ENCODE measurements at regions of chr7 and their contacts with region 1.

Region 1: GRCh38 chr7:26365077-26365900 is 73.6 kb downstream of the SNX10 start:
- DNase-seq: peak in 4 of 10 donors; percentile 19 to 64 (median 56)
- H3K4me3 ChIP-seq: peak overlapping the region in 4 of 59 donors; percentile 5 to 24 (median 14)
- H3K27ac ChIP-seq: peak overlapping the region in 3 of 59 donors; percentile 4 to 10 (median 5)
- H3K27me3 ChIP-seq: peaks cover 0 to 27% (median 0%) of the 10 kb centered on the region in 45 donors
- CTCF ChIP-seq: peak; percentile 65 to 95 (median 85)

Region 2: DNA sequence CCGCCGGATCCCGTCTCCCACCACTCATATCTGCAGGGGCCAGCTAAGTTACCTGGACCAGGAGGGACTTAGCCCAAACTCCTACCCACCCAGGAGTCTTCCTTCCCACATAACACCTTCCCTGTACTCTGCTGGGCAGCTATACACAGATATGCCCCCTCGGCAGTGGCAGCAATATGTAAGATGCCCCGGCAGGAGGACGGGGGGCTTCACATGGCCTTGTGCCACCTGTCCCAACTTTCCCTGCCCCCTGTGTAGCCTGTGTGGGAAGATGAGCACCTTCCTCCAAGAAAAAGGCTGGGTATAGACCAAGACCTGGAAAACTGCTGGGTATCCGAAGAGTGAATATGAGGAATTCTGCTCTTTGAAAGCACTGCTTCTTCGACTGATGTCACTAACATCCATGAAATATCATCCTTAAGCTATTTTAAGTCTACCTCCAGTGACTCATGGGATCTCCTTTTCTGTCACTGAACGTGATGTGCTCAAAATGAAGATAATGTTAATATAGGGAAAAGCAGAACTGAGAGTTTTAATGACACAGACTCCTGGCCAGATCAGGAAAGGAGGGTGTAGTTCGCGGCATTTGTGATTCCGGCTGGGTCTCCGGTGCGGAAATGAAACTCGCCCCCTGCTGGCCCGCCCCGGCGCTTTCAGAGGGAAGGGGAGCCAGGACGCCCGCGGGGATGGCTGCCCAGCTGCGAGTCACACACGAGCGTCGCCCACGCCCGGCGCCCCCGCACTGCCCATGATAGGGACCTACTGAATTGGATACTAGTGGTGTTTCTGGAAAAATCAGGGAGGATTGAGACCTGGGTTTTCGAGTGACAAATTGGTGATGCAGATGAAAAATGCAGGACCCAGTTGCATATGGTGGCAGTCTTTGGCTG is 470.1 kb before region 1 on chr7:
- intact Hi-C with region 1: loop called (anchors 1 to 2 kb)
- DNase-seq: peak in 9 of 10 donors; percentile 49 to 81 (median 60)
- H3K4me3 ChIP-seq: peak overlapping the region in 56 of 59 donors; percentile 0 to 62 (median 41)
- H3K27ac ChIP-seq: peak overlapping the region in 1 of 59 donors; percentile 5
- H3K27me3 ChIP-seq: peaks cover 0 to 24% (median 0%) of the 10 kb centered on the region in 45 donors
- CTCF ChIP-seq: peak; percentile 32 to 80 (median 68)

Region 3: DNA sequence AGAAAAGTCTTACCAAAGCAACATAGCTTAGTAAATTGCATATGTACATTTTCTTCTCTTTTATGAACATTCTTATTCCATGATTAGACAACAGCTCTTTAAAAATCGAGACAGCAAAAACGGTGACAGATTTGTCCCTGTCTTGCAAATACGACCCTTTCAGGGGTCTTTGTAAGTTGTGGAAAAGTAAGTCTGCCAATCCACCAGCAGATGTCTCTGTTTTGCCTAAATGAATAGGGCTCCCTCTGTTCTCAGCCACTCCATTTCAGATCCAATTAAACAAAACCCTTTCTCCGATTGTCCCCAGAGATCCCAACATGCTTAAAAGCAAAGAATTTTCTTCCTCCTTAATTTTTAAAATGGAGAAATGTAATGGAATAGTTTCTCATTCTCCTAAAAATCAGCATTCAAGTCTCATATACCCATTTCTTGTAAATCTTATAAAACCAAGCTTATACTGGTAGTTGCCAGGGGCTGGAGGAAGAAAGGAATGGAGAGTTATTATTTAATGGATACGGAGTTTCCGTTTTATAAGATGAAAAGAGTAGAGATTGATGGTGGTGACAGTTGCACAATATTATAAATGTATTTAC is 274.3 kb before region 1 on chr7:
- intact Hi-C with region 1: loop called (anchors 1 to 5 kb)
- DNase-seq: peak in 1 of 10 donors; percentile 26
- H3K4me3 ChIP-seq: peak overlapping the region in 34 of 59 donors; percentile 0 to 48 (median 24)
- H3K27ac ChIP-seq: no peak overlapping the region
- H3K27me3 ChIP-seq: no peaks in the 10 kb centered on the region
- CTCF ChIP-seq: peak; percentile 53 to 93 (median 75)

Region 4: GRCh38 chr7:26127411-26127810 is 237.9 kb before region 1 on chr7:
- intact Hi-C with region 1: no loop called
- DNase-seq: no peak
- H3K4me3 ChIP-seq: no peak overlapping the region
- H3K27ac ChIP-seq: no peak overlapping the region
- H3K27me3 ChIP-seq: peaks cover 0 to 18% (median 0%) of the 10 kb centered on the region in 45 donors
- CTCF ChIP-seq: no peak

Region 5: DNA sequence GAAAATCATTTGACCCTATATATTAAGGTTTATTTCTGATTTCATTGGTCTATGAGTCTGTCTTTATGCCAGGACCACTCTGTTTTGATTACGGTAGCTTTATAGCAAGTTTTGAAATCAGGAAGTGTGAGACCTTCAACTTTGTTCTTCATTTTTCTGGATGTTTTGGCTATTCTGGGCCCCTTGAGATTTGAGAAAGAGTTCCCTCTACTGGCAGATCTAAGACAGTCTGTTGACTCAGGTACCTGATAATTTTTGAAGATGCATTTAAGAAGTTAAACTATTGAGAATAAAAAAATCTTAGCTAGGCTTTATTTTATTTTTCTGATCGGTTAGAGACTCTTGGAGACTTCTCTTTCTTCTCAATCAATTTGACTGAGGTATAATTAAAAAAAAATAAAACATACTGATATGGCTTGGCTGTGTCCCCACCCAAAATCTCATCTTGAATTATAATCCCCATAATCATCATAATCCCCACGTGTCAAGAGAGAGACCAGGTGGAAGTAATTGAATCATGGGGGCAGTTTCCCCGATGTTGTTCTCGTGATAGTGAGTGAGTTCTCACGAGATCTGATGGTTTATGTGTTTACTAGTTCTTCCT is 135.6 kb after region 1 on chr7:
- intact Hi-C with region 1: no loop called
- DNase-seq: no peak
- H3K4me3 ChIP-seq: no peak overlapping the region
- H3K27ac ChIP-seq: no peak overlapping the region
- H3K27me3 ChIP-seq: peaks cover 0 to 8% (median 0%) of the 10 kb centered on the region in 45 donors
- CTCF ChIP-seq: peak in 54 of 56 donors; percentile 9 to 56 (median 36)

Measured in dorsolateral prefrontal cortex (tissue), 120 donors.